GM10248 (cell line): ENCODE measurements at regions of chr1 and their contacts with region 1.

Region 1: DNA sequence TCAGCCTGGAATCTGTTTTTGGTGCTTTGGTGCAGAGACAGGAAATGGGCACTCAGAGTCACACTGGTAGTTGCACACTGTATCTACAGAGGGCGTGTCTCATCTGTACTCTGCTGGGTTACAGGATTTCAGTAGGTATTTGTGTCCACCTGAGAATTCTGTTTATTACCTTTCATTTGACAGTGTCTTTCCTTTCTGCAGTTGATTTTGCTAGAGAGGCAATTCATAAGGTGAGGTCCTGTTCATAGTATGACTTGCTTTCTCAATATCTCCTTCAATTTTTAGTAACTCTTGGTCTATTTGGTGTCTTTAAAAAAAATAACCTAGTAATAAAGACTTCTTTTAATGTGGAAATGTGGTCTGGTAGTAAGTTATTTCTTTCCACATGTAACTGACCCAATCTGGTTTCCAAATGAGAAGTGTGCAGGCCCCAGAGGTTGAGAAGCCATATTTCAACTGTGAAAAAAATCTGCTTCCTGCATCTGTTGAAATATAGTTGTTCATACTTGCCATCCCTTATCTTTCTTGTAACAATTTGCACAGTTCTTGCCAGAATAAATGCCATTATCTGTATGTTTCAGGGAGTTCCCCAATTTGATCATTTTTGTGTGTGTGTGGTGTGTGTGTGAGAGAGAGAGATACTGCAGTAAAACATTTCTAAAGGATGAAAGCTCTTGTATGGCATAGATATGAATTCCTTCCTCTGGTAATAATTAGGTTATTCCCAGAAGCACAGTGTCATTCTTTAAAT is 78.4 kb upstream of the DNAJC6 start:
- DNase-seq: no peak
- CTCF ChIP-seq: no peak

Region 2: DNA sequence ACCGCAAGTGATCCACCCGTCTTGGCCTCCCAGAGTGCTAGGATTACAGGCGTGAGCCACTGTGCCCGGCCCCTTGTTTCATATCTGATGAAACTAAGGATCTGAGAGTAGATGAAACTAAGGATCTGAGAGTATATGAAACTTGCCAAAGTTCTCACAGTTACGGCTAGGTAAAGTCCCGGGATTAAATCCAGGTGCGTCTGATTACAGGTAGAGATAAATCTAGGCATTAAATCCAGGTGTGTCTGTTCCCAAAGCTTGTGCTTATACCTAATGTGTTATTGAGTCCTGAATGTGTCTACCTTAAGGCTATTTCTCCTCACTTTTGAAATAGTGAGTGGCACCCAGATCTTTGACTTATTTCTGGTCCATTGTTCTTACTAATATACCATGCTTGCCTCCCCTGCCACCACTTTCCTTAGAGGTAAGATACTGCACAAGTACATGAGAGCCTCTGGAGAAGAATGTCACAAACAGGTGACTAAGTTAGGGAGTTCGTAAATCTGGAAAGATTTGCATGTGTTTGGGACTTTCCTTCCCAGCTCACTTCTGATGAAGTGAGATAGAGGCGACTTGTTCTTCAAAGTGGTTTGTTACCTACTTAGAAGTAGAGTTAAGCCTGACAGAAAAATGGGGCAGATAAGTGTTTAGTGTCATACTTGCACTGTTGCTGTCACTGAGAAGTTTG is 16.4 kb before region 1 on chr1:
- CTCF ChIA-PET with region 1: interaction called, 14 read pairs
- POLR2A ChIA-PET with region 1: no interaction called
- DNase-seq: no peak
- CTCF ChIP-seq: no peak